CD8-positive, alpha-beta T cell (primary cell): ENCODE measurements at regions of chr11 and their contacts with region 1.

Region 1: GRCh38 chr11:121655537-121656327 is 203.0 kb upstream of the SORL1-AS1 start:
- DNase-seq: peak; percentile 28 to 76 (median 63)
- ATAC-seq: peak; percentile 84
- H3K4me3 ChIP-seq: peak overlapping the region; percentile 57 to 77
- H3K4me3 Mint-ChIP-seq: peak overlapping the region; percentile 84
- H3K27ac ChIP-seq: peak overlapping the region; percentile 40 to 52
- H3K27ac Mint-ChIP-seq: peak overlapping the region; percentile 38
- H3K4me1 ChIP-seq: peaks cover 23% of the 10 kb centered on the region
- H3K4me1 Mint-ChIP-seq: peaks cover 30% of the 10 kb centered on the region
- H3K27me3 ChIP-seq: no peaks in the 10 kb centered on the region
- H3K27me3 Mint-ChIP-seq: no peaks in the 10 kb centered on the region
- CTCF ChIP-seq: peak; percentile 51

Region 2: GRCh38 chr11:121643535-121644512 is 11.9 kb before region 1 on chr11:
- CTCF ChIA-PET with region 1: interaction called, 23 read pairs
- POLR2A ChIA-PET with region 1: no interaction called
- intact Hi-C with region 1: no loop called
- DNase-seq: no peak
- ATAC-seq: no peak
- H3K4me3 ChIP-seq: no peak overlapping the region
- H3K4me3 Mint-ChIP-seq: no peak overlapping the region
- H3K27ac ChIP-seq: no peak overlapping the region
- H3K27ac Mint-ChIP-seq: no peak overlapping the region
- H3K4me1 ChIP-seq: no peaks in the 10 kb centered on the region
- H3K4me1 Mint-ChIP-seq: no peaks in the 10 kb centered on the region
- H3K27me3 ChIP-seq: no peaks in the 10 kb centered on the region
- H3K27me3 Mint-ChIP-seq: no peaks in the 10 kb centered on the region
- CTCF ChIP-seq: no peak

Region 3: DNA sequence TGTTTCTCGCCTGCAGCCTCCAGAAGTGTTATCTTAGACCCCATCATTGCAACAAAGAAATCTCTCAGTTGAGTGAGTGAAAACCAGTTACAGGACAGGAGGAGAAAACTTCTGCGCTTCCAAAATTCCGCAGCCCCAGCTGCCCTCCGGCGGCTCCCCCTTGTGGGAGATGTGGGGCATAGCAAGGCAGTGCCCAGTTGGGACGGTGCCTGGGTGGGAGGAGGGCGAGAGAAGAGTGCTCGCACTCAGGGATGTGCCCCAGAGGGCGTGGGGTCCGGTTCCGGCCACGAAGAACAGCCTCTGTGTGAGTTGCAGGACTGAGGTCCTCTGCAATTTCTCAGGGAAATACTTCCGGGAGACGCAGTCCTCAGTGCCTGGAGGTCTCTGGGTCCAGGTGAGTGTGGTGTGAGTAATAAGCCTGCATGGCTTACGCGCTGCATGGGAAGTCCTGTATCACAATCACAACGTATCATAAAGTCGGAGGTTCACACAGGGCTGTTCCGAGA is 547.3 kb after region 1 on chr11:
- CTCF ChIA-PET with region 1: no interaction called
- POLR2A ChIA-PET with region 1: no interaction called
- intact Hi-C with region 1: loop called in 1 of 2 experiments (anchors 2 kb)
- DNase-seq: peak in 4 of 9 experiments; percentile 10 to 26 (median 18)
- ATAC-seq: no peak
- H3K4me3 ChIP-seq: no peak overlapping the region
- H3K4me3 Mint-ChIP-seq: no peak overlapping the region
- H3K27ac ChIP-seq: no peak overlapping the region
- H3K27ac Mint-ChIP-seq: no peak overlapping the region
- H3K4me1 ChIP-seq: no peaks in the 10 kb centered on the region
- H3K4me1 Mint-ChIP-seq: no peaks in the 10 kb centered on the region
- H3K27me3 ChIP-seq: no peaks in the 10 kb centered on the region
- H3K27me3 Mint-ChIP-seq: peaks cover 27% of the 10 kb centered on the region
- CTCF ChIP-seq: peak; percentile 40

Region 4: GRCh38 chr11:122505304-122506006 is 849.7 kb after region 1 on chr11:
- CTCF ChIA-PET with region 1: interaction called, 3 read pairs
- POLR2A ChIA-PET with region 1: no interaction called
- intact Hi-C with region 1: loop called in 1 of 2 experiments (anchors 1 kb)
- DNase-seq: peak in 8 of 9 experiments; percentile 4 to 50 (median 38)
- ATAC-seq: no peak
- H3K4me3 ChIP-seq: no peak overlapping the region
- H3K4me3 Mint-ChIP-seq: no peak overlapping the region
- H3K27ac ChIP-seq: no peak overlapping the region
- H3K27ac Mint-ChIP-seq: no peak overlapping the region
- H3K4me1 ChIP-seq: no peaks in the 10 kb centered on the region
- H3K4me1 Mint-ChIP-seq: no peaks in the 10 kb centered on the region
- H3K27me3 ChIP-seq: no peaks in the 10 kb centered on the region
- H3K27me3 Mint-ChIP-seq: peaks cover 34% of the 10 kb centered on the region
- CTCF ChIP-seq: peak; percentile 39

Region 5: DNA sequence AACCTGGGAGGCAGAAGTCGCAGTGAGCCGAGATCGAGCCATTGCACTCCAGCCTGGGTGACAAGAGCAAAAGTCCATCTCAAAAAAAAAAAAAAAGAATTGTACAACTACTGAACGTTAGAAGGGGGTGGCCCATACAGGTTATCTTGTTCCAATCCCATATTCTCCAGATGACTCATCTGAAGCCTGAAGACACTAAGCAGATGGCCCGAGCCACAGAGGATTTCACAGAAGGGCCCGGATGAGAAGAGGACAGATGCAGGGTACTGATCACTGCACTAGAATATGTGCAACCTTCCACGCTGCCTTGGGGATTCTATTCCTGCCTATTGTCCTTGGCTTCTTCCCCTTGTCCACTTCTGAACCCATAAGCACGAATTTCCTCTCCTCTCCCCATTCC is 928.9 kb after region 1 on chr11:
- CTCF ChIA-PET with region 1: no interaction called
- POLR2A ChIA-PET with region 1: no interaction called
- intact Hi-C with region 1: loop called in 1 of 2 experiments (anchors 10 kb)
- DNase-seq: no peak
- ATAC-seq: no peak
- H3K4me3 ChIP-seq: no peak overlapping the region
- H3K4me3 Mint-ChIP-seq: no peak overlapping the region
- H3K27ac ChIP-seq: no peak overlapping the region
- H3K27ac Mint-ChIP-seq: no peak overlapping the region
- H3K4me1 ChIP-seq: peaks cover 4% of the 10 kb centered on the region
- H3K4me1 Mint-ChIP-seq: peaks cover 7% of the 10 kb centered on the region
- H3K27me3 ChIP-seq: no peaks in the 10 kb centered on the region
- H3K27me3 Mint-ChIP-seq: peaks cover 10% of the 10 kb centered on the region
- CTCF ChIP-seq: no peak